Activated CD4-positive, alpha-beta T cell treated with anti-CD3 and anti-CD28 coated beads, Interleukin-2, amount 10 ng/mL, durations not matched to agents 7 days and 5 days (primary cell): ENCODE measurements at regions of chr5 and their contacts with region 1.

Region 1: GRCh38 chr5:43066799-43067741 is 27.0 kb upstream of the ANXA2R start:
- DNase-seq: peak; percentile 90
- H3K4me3 Mint-ChIP-seq: peak overlapping the region; percentile 97
- H3K27ac Mint-ChIP-seq: peak overlapping the region; percentile 99
- H3K4me1 Mint-ChIP-seq: peaks cover 45% of the 10 kb centered on the region
- H3K27me3 Mint-ChIP-seq: no peaks in the 10 kb centered on the region

Region 2: GRCh38 chr5:43049236-43049635 is 17.8 kb before region 1 on chr5:
- CTCF ChIA-PET with region 1: interaction called, 26 read pairs
- POLR2A ChIA-PET with region 1: interaction called, 4 read pairs
- DNase-seq: no peak
- H3K4me3 Mint-ChIP-seq: no peak overlapping the region
- H3K27ac Mint-ChIP-seq: no peak overlapping the region
- H3K4me1 Mint-ChIP-seq: peaks cover 46% of the 10 kb centered on the region
- H3K27me3 Mint-ChIP-seq: no peaks in the 10 kb centered on the region

Region 3: DNA sequence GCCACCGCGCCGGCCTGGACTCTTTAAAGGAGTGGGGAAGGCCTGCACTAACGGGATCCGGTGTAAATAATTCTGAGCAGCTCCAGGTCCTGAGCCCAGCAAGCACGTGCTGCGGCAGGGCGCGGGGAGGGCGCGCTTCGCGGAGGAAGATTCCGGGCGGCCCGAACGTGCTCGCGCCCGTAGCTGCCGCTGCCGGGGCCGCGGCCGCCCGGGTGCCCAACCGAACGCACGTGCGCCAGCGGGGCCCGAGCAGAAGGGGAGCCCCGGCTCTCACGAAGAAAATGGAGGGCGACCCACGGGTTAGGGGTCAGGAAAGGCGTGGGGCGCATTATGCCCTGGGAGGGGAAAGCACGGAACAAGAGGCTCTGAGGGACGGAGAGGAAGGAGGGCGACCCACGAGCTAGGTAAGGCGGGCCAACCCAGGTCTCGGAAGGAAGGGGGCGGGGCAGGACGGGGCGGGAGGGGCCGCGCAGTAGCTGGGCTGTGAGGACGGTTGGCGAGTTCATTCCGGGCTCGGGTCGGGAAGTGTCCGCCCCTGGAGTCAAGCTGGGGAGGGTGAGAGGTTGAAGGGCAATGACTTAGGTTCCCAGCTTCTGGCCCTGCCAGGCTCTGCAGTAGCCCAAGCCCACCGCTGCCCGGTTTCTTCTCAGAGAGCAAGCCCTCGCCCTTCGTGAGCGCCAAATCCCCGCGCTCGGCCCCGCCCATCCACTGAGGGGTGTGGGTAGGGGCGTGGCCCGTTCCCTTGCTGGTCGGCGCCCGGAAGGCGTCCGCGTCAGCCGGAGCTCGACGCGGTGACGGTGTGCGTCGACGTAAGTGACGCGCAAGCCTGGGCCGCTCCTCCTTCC is 53.9 kb after region 1 on chr5 and contains the start of gene ZNF131:
- CTCF ChIA-PET with region 1: interaction called, 13 read pairs
- POLR2A ChIA-PET with region 1: interaction called, 3 read pairs
- DNase-seq: peak; percentile 96
- H3K4me3 Mint-ChIP-seq: peak within 1 kb of the TSS; percentile 91
- H3K27ac Mint-ChIP-seq: peak within 1 kb of the TSS; percentile 95
- H3K4me1 Mint-ChIP-seq: peaks cover 45% of the 10 kb centered on the region
- H3K27me3 Mint-ChIP-seq: no peaks in the 10 kb centered on the region
- total RNA-seq, gene ZNF131: 48.4 to 50.8 TPM

Region 4: DNA sequence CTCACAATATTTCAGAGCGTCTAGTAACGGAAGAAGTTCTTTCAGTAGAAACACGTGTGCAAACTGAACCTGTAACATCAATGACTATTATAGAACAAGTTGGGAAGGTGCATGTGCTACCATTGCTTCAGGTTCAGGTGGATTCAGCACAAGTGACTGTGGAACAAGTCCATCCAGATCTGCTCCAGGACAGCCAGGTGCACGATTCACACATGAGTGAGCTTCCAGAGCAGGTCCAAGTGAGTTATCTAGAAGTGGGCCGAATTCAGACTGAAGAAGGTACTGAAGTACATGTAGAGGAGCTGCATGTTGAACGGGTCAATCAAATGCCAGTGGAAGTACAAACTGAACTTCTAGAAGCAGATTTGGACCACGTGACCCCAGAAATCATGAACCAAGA is 107.5 kb after region 1 on chr5:
- CTCF ChIA-PET with region 1: no interaction called
- POLR2A ChIA-PET with region 1: no interaction called
- DNase-seq: no peak
- H3K4me3 Mint-ChIP-seq: no peak overlapping the region
- H3K27ac Mint-ChIP-seq: no peak overlapping the region
- H3K4me1 Mint-ChIP-seq: peaks cover 5% of the 10 kb centered on the region
- H3K27me3 Mint-ChIP-seq: no peaks in the 10 kb centered on the region